HepG2 (cell line): ENCODE measurements at regions of chr14 and their contacts with region 1.

Region 1: GRCh38 chr14:37824939-37825712 is 229.7 kb downstream of the TTC6 start:
- DNase-seq: no peak
- ATAC-seq: peak; percentile 64
- H3K4me3 ChIP-seq: no peak overlapping the region
- H3K27ac ChIP-seq: no peak overlapping the region
- H3K4me1 ChIP-seq: peaks cover 12% of the 10 kb centered on the region
- H3K27me3 ChIP-seq: no peaks in the 10 kb centered on the region
- CTCF ChIP-seq: no peak
- EP300 ChIP-seq: no peak
- POLR2A ChIP-seq: no peak
- RAD21 ChIP-seq: no peak

Region 2: DNA sequence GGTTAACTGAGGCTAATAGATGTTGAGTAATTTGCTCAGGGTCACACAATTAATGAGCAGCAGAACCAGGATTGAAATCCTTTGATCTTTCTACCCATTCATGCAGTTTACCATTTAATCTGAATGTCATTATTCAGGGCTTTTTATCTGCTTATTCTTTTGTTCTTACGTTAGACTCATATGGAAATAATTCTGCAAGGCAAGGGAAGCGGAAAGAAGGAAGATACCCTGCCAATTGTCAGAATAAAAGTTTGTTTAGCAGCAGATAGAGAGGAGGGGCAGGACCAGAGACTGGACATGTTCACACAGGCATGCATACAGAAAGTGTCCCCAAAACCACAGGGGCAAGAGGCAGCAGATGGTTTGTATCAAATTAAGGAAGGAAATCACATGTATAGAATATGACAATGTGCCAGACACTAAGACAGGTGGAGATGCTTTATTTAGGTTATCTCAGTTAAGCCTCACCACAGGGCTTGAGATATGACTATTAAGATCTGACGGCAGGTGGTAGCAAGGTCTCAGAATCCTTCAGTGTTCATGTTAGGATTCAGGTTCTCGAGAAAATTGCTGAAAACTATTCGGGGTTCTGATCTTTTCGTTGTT is 1969.1 kb before region 1 on chr14:
- CTCF ChIA-PET with region 1: no interaction called
- POLR2A ChIA-PET with region 1: no interaction called
- in situ Hi-C with region 1: loop called (anchors 25 kb)
- intact Hi-C with region 1: no loop called
- DNase-seq: no peak
- ATAC-seq: no peak
- H3K4me3 ChIP-seq: no peak overlapping the region
- H3K27ac ChIP-seq: no peak overlapping the region
- H3K4me1 ChIP-seq: no peaks in the 10 kb centered on the region
- H3K27me3 ChIP-seq: no peaks in the 10 kb centered on the region
- CTCF ChIP-seq: no peak
- EP300 ChIP-seq: no peak
- POLR2A ChIP-seq: no peak
- RAD21 ChIP-seq: no peak

Region 3: DNA sequence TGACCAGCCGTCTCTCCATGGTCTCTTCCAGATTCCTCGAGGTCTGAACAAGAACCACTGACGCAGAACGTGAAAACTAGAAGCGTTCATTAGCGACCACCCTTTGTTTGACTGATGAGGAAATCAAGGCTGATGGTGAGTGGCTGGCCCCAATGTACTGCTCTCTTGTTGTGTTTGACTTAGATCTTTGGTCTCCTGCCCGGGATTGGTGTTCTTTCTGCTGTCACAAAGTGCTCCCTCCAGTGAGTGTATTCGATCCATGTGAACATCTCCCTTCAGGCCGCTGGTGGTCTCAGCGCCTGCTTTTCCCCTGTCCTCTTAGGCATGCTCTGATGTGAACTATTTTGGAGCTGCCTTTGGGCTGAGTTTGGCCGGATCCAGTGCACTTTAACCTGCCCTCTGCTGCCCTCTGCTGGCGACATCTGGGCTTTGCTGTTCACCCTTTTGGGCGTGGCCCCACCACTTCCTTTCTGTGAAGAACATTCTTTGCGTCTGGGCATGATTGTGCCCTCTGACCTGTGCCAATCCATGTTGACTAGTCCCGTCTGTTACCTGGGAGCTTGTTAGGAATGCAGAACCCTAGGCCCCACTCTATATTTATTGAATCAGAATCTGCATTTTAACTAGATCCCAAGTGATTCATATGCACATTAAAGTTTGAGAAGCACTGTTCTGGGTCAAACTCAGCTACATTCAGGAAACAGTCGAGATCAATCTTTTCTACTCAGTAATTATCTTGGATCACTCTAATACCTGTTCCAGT is 49.5 kb after region 1 on chr14:
- CTCF ChIA-PET with region 1: no interaction called
- POLR2A ChIA-PET with region 1: no interaction called
- in situ Hi-C with region 1: no loop called
- intact Hi-C with region 1: no loop called
- DNase-seq: peak; percentile 90
- ATAC-seq: peak; percentile 97
- H3K4me3 ChIP-seq: peak overlapping the region in 1 of 3 experiments; percentile 49; a peak in 2 of 6 replicates
- H3K27ac ChIP-seq: peak overlapping the region; percentile 4
- H3K4me1 ChIP-seq: peaks cover 42% of the 10 kb centered on the region
- H3K27me3 ChIP-seq: no peaks in the 10 kb centered on the region
- CTCF ChIP-seq: peak; percentile 100
- EP300 ChIP-seq: no peak; a peak in 1 of 4 replicates
- POLR2A ChIP-seq: no peak
- RAD21 ChIP-seq: peak; percentile 100

Region 4: GRCh38 chr14:37916302-37916701 is 91.2 kb after region 1 on chr14:
- CTCF ChIA-PET with region 1: no interaction called
- POLR2A ChIA-PET with region 1: no interaction called
- in situ Hi-C with region 1: no loop called
- intact Hi-C with region 1: no loop called
- DNase-seq: no peak
- ATAC-seq: no peak
- H3K4me3 ChIP-seq: no peak overlapping the region
- H3K27ac ChIP-seq: no peak overlapping the region
- H3K4me1 ChIP-seq: no peaks in the 10 kb centered on the region
- H3K27me3 ChIP-seq: no peaks in the 10 kb centered on the region; a peak in 1 of 5 replicates
- CTCF ChIP-seq: no peak
- EP300 ChIP-seq: no peak
- POLR2A ChIP-seq: no peak
- RAD21 ChIP-seq: no peak